SK-N-SH (cell line): ENCODE measurements at regions of chr2 and their contacts with region 1.

Region 1: GRCh38 chr2:121356058-121356640 is 71.1 kb upstream of the TFCP2L1 start:
- DNase-seq: peak; percentile 63
- H3K4me3 ChIP-seq: peak overlapping the region in 1 of 2 experiments; percentile 33; a peak in 1 of 4 replicates
- H3K27ac ChIP-seq: no peak overlapping the region
- H3K4me1 ChIP-seq: peaks cover 15 to 17% of the 10 kb centered on the region in 2 experiments; a peak in 3 of 4 replicates
- H3K27me3 ChIP-seq: no peaks in the 10 kb centered on the region
- CTCF ChIP-seq: peak; percentile 81
- EP300 ChIP-seq: no peak
- RAD21 ChIP-seq: peak; percentile 75

Region 2: DNA sequence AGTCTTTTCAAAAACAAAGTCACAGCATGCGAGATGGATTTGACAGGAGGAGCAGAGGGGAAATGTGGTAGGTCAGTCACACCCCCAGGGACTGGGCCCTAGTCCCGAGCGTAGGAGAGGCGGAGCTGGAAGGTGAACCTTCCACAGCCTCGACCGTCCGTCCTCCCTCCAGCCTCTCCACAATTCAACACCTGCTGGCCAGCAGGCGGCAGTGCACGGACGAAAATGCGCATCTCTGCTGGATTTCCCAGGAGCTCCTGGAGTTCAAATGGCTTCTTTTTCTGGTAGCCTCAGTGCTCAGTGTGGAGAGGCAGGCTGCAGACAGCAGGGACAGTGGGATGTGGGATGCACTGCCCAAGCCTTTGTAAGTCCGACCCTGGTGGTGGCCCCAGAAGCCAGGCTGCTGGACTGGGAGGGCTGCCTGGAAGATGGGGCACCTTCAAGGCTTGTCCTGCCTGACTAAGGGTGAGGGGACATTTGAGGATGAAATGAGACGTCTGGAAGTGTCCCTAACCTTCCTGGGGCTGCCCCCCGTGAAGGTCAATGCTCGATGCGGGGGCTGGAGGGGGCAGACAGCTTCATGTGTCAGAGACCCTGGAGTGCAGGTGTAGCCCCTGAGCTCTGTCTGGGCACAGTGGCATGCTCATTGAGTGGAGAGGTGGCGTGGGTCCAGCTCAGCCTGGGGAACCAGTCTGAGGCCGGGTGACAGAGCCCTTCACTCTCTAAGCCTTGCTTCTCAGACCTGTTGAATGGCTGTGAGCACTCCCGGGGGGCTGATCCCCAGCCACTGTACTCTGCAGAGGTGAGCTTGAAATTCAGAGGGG is 260.7 kb before region 1 on chr2:
- CTCF ChIA-PET with region 1: interaction called, 272 read pairs
- POLR2A ChIA-PET with region 1: no interaction called
- DNase-seq: peak; percentile 85
- H3K4me3 ChIP-seq: no peak overlapping the region
- H3K27ac ChIP-seq: no peak overlapping the region
- H3K4me1 ChIP-seq: peaks cover 0 to 8% of the 10 kb centered on the region in 2 experiments; a peak in 2 of 4 replicates
- H3K27me3 ChIP-seq: peaks cover 15% of the 10 kb centered on the region
- CTCF ChIP-seq: peak; percentile 67
- EP300 ChIP-seq: no peak
- RAD21 ChIP-seq: peak; percentile 84

Region 3: DNA sequence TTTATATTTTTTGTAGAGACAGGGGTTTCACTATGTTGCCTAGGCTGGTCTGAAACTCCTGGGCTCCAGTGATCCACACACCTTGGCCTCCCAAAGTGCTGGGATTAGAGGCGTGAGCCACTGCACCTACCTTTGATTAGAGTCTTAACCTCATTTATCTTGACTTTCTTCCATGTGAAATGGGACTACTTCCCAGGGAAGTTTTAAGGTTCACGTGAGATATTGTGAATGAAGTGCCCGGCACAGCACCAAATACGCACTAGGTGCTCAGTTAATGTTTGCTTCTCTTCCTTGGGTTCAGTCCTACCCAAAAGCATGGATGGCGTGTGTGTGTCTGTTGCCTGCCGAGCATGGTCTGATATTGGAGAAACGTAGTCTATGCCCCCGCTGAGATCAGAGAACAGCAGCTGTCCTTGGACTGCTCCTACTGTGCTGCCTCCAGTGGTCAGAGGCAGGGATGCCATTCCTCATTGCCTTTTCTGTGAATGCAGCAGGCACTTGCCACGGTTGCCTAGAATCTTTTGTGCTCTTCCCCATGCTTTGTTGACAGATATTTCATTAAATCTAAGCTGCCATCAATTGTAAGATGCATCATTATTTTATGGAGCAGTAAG is 58.8 kb before region 1 on chr2:
- CTCF ChIA-PET with region 1: interaction called, 12 read pairs
- POLR2A ChIA-PET with region 1: no interaction called
- DNase-seq: peak; percentile 79
- H3K4me3 ChIP-seq: no peak overlapping the region
- H3K27ac ChIP-seq: no peak overlapping the region
- H3K4me1 ChIP-seq: no peaks in the 10 kb centered on the region
- H3K27me3 ChIP-seq: 0 out of 2 replicates have a peak, but pooled peaks cover 6% of the 10 kb centered on the region
- CTCF ChIP-seq: peak; percentile 58
- EP300 ChIP-seq: no peak
- RAD21 ChIP-seq: peak; percentile 62

Region 4: GRCh38 chr2:121345887-121346286 is 10.3 kb before region 1 on chr2:
- CTCF ChIA-PET with region 1: interaction called, 28 read pairs
- POLR2A ChIA-PET with region 1: no interaction called
- DNase-seq: no peak
- H3K4me3 ChIP-seq: no peak overlapping the region
- H3K27ac ChIP-seq: no peak overlapping the region
- H3K4me1 ChIP-seq: no peaks in the 10 kb centered on the region
- H3K27me3 ChIP-seq: no peaks in the 10 kb centered on the region
- CTCF ChIP-seq: no peak
- EP300 ChIP-seq: no peak
- RAD21 ChIP-seq: no peak